ENCODE measurements at regions of chr4 and their contacts with region 1.

Region 1: DNA sequence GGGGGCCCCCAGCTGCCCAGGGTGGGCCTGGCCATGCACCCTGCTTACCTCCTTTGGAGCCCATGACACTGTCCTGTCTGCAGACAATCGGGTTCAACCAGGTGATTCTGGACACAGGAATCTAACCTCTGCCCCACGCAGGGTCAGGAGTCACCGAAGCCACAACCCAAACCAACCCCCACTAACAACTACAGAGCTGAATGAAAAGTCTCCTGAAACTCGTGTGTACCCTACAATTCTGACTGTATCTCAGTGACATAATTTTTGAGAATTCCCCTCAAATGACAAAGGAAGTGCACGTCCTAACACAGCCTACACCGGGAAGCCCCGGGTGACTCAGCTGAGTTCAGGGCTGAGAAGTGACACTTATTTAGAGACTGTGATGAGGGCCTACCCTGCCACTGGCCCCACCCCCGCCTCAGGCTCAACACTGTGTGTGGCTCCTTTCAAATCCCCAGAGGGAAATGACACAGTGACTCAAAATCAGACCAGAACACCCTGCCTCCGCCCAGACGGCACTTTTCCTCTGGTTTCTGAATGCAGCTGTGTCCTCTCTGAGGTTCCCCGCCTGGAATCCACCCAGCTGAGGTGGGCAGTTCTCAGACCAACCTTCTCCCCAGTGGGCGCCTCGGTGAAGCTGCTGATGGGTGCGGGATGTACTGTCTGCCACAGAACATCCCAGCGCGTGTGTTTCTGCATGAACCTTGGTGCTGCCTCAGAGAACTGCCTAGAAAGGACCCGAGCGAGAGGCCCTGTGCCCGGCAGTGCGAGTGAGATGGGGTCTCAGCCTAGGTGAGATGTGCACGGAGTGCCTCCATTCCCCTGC is 9.9 kb downstream of the TNIP2 start:
- DNase-seq: peak; percentile 99
- H3K4me3 Mint-ChIP-seq: peak overlapping the region; percentile 27
- H3K27ac Mint-ChIP-seq: peak overlapping the region; percentile 90
- H3K4me1 Mint-ChIP-seq: peaks cover 64% of the 10 kb centered on the region
- H3K27me3 Mint-ChIP-seq: no peaks in the 10 kb centered on the region

Region 2: GRCh38 chr4:2024683-2025082 is 721.5 kb before region 1 on chr4:
- CTCF ChIA-PET with region 1: no interaction called
- intact Hi-C with region 1: no loop called
- DNase-seq: no peak
- H3K4me3 Mint-ChIP-seq: no peak overlapping the region
- H3K27ac Mint-ChIP-seq: no peak overlapping the region
- H3K4me1 Mint-ChIP-seq: no peaks in the 10 kb centered on the region
- H3K27me3 Mint-ChIP-seq: peaks cover 23% of the 10 kb centered on the region

Region 3: GRCh38 chr4:2412885-2413716 is 333.1 kb before region 1 on chr4:
- CTCF ChIA-PET with region 1: no interaction called
- intact Hi-C with region 1: loop called (anchors 2 kb)
- DNase-seq: peak; percentile 94
- H3K4me3 Mint-ChIP-seq: peak overlapping the region; percentile 63
- H3K27ac Mint-ChIP-seq: peak overlapping the region; percentile 96
- H3K4me1 Mint-ChIP-seq: peaks cover 54% of the 10 kb centered on the region
- H3K27me3 Mint-ChIP-seq: peaks cover 15% of the 10 kb centered on the region

Region 4: GRCh38 chr4:2570551-2571222 is 175.5 kb before region 1 on chr4:
- CTCF ChIA-PET with region 1: no interaction called
- intact Hi-C with region 1: loop called (anchors 1 kb)
- DNase-seq: peak; percentile 89
- H3K4me3 Mint-ChIP-seq: peak overlapping the region; percentile 46
- H3K27ac Mint-ChIP-seq: peak overlapping the region; percentile 74
- H3K4me1 Mint-ChIP-seq: peaks cover 58% of the 10 kb centered on the region
- H3K27me3 Mint-ChIP-seq: no peaks in the 10 kb centered on the region

Region 5: DNA sequence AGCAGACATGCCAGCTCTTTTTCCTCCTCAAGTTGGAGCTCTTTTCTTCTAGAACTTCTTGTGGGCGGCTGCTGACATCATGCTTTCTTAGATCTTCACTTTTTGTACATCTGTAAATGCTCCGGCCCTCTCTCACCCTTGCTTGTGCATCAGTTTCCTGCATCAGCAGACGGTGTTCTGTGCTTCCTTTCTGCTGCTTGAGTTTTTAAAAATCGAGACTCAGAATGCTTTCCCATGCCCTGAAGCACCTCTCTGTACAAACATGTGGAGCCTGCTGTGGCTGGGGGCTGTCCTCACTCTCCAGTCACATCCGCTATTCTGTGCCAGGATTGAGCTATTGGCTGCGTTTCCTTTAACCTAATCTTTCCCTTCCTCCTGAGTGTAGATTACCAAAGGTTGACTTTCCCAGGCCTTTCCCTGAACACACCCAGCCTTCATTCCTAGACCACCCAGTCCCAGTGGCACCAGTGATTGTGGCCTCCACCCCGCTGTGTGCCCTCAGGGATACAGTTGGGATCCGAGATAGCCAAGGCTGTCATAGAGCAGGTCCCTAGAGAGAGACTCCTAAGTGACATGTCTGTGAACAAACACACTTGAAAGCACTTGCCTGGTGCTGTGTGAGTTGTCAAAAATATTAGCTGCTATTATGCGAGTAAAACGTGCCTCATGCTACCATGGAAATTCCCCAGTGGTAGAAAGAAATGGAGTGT is 32.0 kb before region 1 on chr4:
- CTCF ChIA-PET with region 1: no interaction called
- intact Hi-C with region 1: loop called (anchors 1 kb)
- DNase-seq: peak; percentile 81
- H3K4me3 Mint-ChIP-seq: peak overlapping the region; percentile 7
- H3K27ac Mint-ChIP-seq: peak overlapping the region; percentile 86
- H3K4me1 Mint-ChIP-seq: peaks cover 40% of the 10 kb centered on the region
- H3K27me3 Mint-ChIP-seq: no peaks in the 10 kb centered on the region

Region 6: DNA sequence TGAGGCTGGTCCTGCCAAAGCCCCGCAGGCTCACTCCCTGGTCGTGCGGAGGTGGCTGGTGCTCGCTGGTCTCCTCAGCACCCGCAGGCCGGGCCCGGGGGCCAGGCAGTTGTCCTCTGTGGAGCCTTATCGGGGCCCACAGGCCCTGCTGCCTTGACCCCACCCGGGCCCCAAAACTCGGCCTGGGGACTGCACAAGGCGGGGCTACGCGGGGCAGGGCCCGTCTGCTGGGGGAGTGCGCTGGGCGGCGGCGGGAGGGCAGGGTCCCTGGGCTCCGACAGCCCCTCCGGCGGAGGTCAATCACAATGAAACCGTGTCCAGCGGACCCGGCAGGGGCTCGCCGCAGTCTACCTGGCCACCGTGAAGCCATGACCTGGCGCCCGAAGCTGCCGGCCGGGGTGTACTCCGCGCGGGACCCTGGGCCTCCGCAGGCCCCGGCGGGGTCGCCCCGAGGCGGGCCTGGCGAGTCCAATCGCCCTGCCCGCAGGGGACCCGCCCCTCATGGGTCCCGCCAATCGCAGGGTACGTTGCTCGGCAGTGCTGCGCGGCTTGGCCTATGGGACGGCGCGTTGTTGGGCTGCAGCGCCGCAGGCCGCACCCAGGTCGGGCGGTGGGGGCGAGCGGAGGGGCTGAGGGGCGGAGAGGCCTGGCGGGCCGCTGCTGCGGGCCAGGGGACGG is 97.2 kb after region 1 on chr4 and contains the start of gene ADD1:
- CTCF ChIA-PET with region 1: no interaction called
- intact Hi-C with region 1: loop called (anchors 1 kb)
- DNase-seq: peak; percentile 92
- H3K4me3 Mint-ChIP-seq: peak within 1 kb of the TSS; percentile 83
- H3K27ac Mint-ChIP-seq: peak within 1 kb of the TSS; percentile 91
- H3K4me1 Mint-ChIP-seq: peaks cover 58% of the 10 kb centered on the region
- H3K27me3 Mint-ChIP-seq: no peaks in the 10 kb centered on the region
- total RNA-seq, gene ADD1: 165 TPM

Region 7: GRCh38 chr4:2954358-2955185 is 208.4 kb after region 1 on chr4:
- CTCF ChIA-PET with region 1: interaction called, 10 read pairs
- intact Hi-C with region 1: loop called (anchors 1 kb)
- DNase-seq: peak; percentile 85
- H3K4me3 Mint-ChIP-seq: peak overlapping the region; percentile 39
- H3K27ac Mint-ChIP-seq: peak overlapping the region; percentile 99
- H3K4me1 Mint-ChIP-seq: peaks cover 59% of the 10 kb centered on the region
- H3K27me3 Mint-ChIP-seq: no peaks in the 10 kb centered on the region

Measured in activated naive CD4-positive, alpha-beta T cell treated with anti-CD3 and anti-CD28 coated beads for 36 hours (primary cell).